Heart left ventricle (tissue), 16 donors: ENCODE measurements at regions of chr12 and their contacts with region 1.

Region 1: DNA sequence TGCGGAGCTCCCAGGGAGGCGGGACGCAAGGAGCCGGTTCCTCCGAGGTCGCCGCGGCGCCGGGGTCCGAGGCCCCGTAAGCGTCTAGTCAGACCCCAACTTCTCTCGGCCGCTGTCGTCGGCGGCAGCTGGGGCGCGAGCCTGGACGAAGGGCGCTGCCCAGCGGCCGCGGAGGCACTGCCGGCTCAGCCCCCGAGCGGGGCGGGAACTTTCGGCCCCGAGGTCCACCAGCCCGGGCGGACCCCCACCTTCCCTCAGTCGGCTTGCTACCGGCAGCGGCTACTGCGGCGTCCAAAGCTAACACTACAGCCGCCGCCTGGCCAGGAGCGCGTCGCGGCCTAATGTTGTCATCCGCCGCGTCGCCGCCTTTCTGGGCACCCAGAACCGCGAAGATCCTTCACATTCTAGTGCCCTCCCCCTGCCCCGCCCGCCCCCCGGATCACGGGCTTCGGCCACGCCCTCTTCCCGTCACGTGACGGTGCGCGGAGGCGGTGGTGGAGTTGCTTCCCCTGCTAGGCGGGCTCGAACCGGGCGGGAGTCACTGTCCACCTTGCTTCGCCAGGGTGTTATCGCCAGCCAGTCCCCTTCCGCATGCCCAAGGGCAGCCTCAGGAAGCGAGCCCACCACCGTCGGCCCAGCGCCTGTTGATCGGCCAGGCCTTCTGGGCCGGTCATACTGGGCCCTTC is at the start of gene OSBPL8:
- DNase-seq: peak; percentile 96 to 98 (median 97)
- ATAC-seq: peak; percentile 95 to 98 (median 96)
- H3K4me3 ChIP-seq: peak within 1 kb of the TSS; percentile 63 to 95 (median 88)
- H3K27ac ChIP-seq: peak within 1 kb of the TSS; percentile 80 to 95 (median 92)
- H3K4me1 ChIP-seq: peaks cover 0 to 47% (median 24%) of the 10 kb centered on the region in 12 donors
- H3K27me3 ChIP-seq: no peaks in the 10 kb centered on the region
- CTCF ChIP-seq: peak in 9 of 12 donors; percentile 11 to 62 (median 44)
- POLR2A ChIP-seq: peak in 1 of 2 donors; percentile 90
- total RNA-seq, gene OSBPL8: 27.9 to 58.7 (median 46.4) TPM

Region 2: DNA sequence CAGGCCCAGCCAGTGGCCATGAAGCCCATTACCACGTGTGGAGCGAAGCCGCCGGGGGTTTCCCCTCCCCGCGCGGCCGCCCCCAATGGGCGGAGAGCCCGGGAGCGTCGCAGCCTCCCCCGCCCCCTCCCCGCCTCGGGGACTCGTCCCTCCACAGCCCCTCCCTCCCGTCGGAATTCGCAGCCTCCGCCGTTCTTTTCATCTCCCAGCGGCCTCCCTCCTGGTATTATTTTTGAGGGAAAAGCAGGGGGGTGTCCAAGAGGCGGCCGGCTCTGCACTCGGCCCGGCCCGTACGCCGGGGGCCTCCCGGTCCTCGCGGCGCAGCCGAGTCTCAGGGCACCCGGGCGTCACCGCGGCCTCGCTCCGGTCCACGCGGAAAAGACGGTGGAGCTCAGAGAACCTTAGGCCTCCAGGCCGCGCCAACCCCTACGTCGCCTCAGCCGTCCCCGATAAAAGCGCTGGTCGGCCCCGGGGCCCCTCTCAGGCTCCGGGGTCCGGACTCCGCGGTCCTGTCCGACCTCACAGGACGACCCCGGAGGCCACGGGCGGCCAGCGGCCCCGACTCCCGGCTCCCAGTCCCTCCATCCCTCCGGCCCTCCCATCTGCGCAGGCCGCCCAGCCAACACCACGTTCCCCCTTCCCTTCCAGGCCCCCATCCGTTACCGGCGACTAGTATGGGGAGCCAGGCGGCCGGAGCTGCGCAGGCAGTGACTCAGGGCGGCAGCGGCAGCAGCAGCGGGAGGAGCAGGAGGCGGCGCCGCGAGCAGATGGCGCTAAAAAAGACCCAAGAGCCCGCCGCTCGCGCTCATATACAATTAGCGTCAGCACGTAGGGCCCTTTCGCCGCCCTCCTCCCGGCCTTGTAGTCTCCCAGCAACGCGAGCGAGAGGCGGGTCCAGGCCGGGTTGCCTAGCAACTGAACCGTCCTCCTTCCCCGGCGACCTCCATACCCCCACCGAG is 475.4 kb before region 1 on chr12 and contains the start of gene NAP1L1:
- intact Hi-C with region 1: loop called in 3 of 10 experiments (anchors 10 kb)
- DNase-seq: peak; percentile 98 to 99 (median 99)
- ATAC-seq: peak; percentile 96 to 99 (median 97)
- H3K4me3 ChIP-seq: peak within 1 kb of the TSS; percentile 76 to 97 (median 90)
- H3K27ac ChIP-seq: peak within 1 kb of the TSS; percentile 95 to 100 (median 99)
- H3K4me1 ChIP-seq: peaks cover 0 to 49% (median 28%) of the 10 kb centered on the region in 12 donors
- H3K27me3 ChIP-seq: no peaks in the 10 kb centered on the region
- CTCF ChIP-seq: no peak
- POLR2A ChIP-seq: peak; percentile 26 to 96
- total RNA-seq, gene NAP1L1: 191 to 359 (median 247) TPM

Region 3: DNA sequence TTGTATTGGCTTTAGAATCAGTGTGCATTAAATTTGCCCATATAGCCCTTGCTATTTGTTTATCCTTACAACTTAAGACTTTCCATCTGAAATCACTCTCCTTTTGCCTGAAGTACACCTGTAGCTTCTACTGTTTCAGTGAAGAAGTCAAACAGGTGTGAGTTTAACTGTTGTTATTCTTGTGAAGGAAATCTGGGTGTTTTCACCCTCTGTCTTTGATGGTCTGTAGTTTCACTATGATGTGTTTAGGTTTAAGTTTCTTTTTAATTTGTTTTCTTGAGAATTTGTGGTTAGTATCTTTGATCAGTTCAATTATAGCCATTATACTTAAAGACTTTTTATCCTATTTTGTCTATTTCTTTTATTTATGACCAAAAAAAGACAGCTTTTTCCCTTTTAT is 142.4 kb before region 1 on chr12:
- intact Hi-C with region 1: loop called in 1 of 10 experiments (anchors 10 kb)
- DNase-seq: no peak
- ATAC-seq: no peak
- H3K4me3 ChIP-seq: no peak overlapping the region
- H3K27ac ChIP-seq: no peak overlapping the region
- H3K4me1 ChIP-seq: peaks cover 0 to 2% (median 0%) of the 10 kb centered on the region in 12 donors
- H3K27me3 ChIP-seq: no peaks in the 10 kb centered on the region
- CTCF ChIP-seq: no peak
- POLR2A ChIP-seq: no peak

Region 4: GRCh38 chr12:76462668-76463224 is 96.8 kb before region 1 on chr12:
- intact Hi-C with region 1: loop called in 4 of 10 experiments (anchors 5 to 10 kb)
- DNase-seq: no peak
- ATAC-seq: no peak
- H3K4me3 ChIP-seq: no peak overlapping the region
- H3K27ac ChIP-seq: no peak overlapping the region
- H3K4me1 ChIP-seq: peaks cover 2 to 35% (median 12%) of the 10 kb centered on the region in 12 donors
- H3K27me3 ChIP-seq: no peaks in the 10 kb centered on the region
- CTCF ChIP-seq: no peak
- POLR2A ChIP-seq: no peak

Region 5: DNA sequence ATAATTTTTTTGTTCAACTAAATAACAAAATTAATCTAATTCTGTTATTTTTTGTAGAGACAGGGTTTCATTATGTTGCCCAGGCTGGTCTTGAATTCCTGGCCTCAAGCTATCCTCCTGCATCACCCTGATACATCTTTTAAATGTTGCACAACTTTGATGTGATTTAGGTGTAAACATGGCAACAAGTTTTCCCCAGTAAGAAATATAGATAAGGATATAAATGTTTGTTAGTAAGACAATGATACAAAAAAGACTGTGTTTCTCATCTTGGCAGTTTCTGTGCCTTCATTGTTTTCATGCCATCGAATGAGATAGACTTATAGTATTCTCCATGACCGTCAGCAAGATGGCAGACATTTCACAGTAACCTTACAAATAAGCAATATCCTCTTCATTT is 44.6 kb after region 1 on chr12:
- intact Hi-C with region 1: no loop called
- DNase-seq: no peak
- ATAC-seq: no peak
- H3K4me3 ChIP-seq: no peak overlapping the region
- H3K27ac ChIP-seq: no peak overlapping the region
- H3K4me1 ChIP-seq: no peaks in the 10 kb centered on the region
- H3K27me3 ChIP-seq: no peaks in the 10 kb centered on the region
- CTCF ChIP-seq: no peak
- POLR2A ChIP-seq: no peak

Region 6: GRCh38 chr12:76706101-76706500 is 146.6 kb after region 1 on chr12:
- intact Hi-C with region 1: no loop called
- DNase-seq: no peak
- ATAC-seq: no peak
- H3K4me3 ChIP-seq: no peak overlapping the region
- H3K27ac ChIP-seq: no peak overlapping the region
- H3K4me1 ChIP-seq: no peaks in the 10 kb centered on the region
- H3K27me3 ChIP-seq: no peaks in the 10 kb centered on the region
- CTCF ChIP-seq: no peak
- POLR2A ChIP-seq: no peak